Activated naive CD8-positive, alpha-beta T cell treated with anti-CD3 and anti-CD28 coated beads, Interleukin-2, amount 10 ng/mL, durations not matched to agents 7 days and 5 days (primary cell): ENCODE measurements at regions of chrX and their contacts with region 1.

Region 1: DNA sequence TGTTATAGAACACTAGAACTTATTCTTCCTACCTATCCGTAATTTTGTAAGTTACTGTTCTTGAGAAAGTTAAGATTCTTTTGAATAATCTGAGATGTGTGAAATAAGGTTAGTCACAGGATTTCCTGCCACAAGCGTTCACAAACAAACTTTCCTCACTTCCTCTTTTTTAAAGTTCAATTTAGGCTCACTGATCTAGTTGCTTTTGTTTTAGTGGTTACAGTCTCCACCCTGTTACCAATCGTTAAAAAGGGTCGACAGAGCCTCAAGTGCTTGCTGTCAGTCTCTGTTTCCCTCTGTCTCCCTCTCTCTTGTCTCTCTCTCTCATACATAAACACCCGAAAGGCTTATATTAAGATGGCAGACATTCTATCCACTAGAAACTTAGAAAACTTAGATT is 35.9 kb upstream of the STK26 start:
- DNase-seq: no peak
- ATAC-seq: peak; percentile 95
- H3K4me3 Mint-ChIP-seq: peak overlapping the region; percentile 79
- H3K27ac Mint-ChIP-seq: peak overlapping the region; percentile 98
- H3K4me1 Mint-ChIP-seq: peaks cover 23% of the 10 kb centered on the region
- H3K27me3 Mint-ChIP-seq: no peaks in the 10 kb centered on the region

Region 2: GRCh38 chrX:131955099-131955777 is 32.0 kb before region 1 on chrX:
- POLR2A ChIA-PET with region 1: no interaction called
- DNase-seq: no peak
- ATAC-seq: no peak
- H3K4me3 Mint-ChIP-seq: no peak overlapping the region
- H3K27ac Mint-ChIP-seq: no peak overlapping the region
- H3K4me1 Mint-ChIP-seq: peaks cover 5% of the 10 kb centered on the region
- H3K27me3 Mint-ChIP-seq: peaks cover 2% of the 10 kb centered on the region

Region 3: GRCh38 chrX:131975851-131976250 is 11.4 kb before region 1 on chrX:
- POLR2A ChIA-PET with region 1: no interaction called
- DNase-seq: no peak
- ATAC-seq: no peak
- H3K4me3 Mint-ChIP-seq: no peak overlapping the region
- H3K27ac Mint-ChIP-seq: no peak overlapping the region
- H3K4me1 Mint-ChIP-seq: no peaks in the 10 kb centered on the region
- H3K27me3 Mint-ChIP-seq: no peaks in the 10 kb centered on the region

Region 4: DNA sequence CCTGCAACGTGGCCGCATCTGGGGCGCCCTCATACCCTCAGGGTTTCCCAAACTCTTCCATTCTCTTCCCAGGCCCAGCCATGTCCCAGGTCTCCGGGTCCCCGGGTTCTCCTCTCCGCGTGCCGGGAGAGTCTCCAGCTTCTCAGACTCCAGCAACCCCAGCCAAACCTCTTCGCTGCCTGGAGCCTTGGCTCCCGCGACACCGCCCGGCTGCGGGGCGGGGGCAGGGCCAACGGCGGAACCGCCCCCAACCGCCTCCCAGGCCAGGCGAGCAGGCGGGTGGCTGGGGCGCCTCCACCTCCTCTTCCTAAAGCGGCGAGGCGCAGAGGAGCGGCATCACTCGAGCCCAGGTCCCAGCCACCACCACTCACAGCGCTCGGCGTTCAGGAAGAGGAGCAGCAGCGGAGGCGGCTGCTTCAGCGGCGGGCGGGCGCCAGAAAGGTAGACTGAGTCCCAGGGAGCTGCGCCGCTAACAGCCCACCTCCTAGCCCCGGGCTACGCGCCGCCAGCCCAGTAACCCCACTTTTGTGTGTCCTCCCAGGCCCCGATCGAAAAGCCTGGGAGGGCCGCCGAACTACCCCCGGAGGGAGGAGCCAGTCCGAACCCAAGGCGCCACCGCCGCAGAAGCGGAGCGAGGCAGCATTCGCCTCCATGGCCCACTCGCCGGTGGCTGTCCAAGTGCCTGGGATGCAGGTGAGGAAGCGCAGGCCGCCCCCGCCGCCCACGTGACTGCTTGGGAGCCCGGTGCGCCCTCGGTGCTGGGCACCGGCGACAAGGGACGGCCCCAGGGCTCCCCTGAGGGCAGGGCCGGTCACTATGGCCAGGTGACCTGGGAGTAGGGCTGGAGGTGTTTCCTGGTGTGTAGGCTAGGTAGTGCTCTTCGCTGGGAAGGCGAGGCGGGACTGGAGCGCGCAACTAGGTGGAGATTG is 36.0 kb after region 1 on chrX and contains the start of gene STK26:
- POLR2A ChIA-PET with region 1: interaction called, 22 read pairs
- DNase-seq: peak; percentile 84
- ATAC-seq: peak; percentile 91
- H3K4me3 Mint-ChIP-seq: peak within 1 kb of the TSS; percentile 95
- H3K27ac Mint-ChIP-seq: peak within 1 kb of the TSS; percentile 95
- H3K4me1 Mint-ChIP-seq: peaks cover 20% of the 10 kb centered on the region
- H3K27me3 Mint-ChIP-seq: no peaks in the 10 kb centered on the region
- total RNA-seq, gene STK26: 52.7 to 54.0 TPM

Region 5: DNA sequence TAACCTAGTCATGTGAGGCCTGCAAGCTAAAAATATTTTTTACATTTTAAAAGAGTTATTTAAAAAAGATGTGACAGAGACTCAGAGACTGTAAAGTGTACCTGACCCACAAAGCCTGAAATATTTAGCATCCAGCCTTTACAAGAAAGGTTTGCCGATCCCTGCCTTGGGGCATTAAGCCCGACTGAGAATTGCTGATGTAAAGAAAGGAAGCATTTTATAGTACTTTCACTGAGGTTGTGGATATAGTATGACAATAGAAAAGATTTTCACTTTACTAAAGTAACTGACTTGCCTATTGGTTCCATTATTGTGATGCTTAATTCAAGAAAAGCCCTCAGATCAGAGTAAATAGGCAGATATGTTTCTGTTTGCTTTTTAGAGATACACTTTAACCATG is 52.8 kb after region 1 on chrX:
- POLR2A ChIA-PET with region 1: no interaction called
- DNase-seq: no peak
- ATAC-seq: no peak
- H3K4me3 Mint-ChIP-seq: no peak overlapping the region
- H3K27ac Mint-ChIP-seq: no peak overlapping the region
- H3K4me1 Mint-ChIP-seq: peaks cover 17% of the 10 kb centered on the region
- H3K27me3 Mint-ChIP-seq: no peaks in the 10 kb centered on the region